Ascending aorta (tissue), 2 donors: ENCODE measurements at regions of chr11 and their contacts with region 1.

Region 1: DNA sequence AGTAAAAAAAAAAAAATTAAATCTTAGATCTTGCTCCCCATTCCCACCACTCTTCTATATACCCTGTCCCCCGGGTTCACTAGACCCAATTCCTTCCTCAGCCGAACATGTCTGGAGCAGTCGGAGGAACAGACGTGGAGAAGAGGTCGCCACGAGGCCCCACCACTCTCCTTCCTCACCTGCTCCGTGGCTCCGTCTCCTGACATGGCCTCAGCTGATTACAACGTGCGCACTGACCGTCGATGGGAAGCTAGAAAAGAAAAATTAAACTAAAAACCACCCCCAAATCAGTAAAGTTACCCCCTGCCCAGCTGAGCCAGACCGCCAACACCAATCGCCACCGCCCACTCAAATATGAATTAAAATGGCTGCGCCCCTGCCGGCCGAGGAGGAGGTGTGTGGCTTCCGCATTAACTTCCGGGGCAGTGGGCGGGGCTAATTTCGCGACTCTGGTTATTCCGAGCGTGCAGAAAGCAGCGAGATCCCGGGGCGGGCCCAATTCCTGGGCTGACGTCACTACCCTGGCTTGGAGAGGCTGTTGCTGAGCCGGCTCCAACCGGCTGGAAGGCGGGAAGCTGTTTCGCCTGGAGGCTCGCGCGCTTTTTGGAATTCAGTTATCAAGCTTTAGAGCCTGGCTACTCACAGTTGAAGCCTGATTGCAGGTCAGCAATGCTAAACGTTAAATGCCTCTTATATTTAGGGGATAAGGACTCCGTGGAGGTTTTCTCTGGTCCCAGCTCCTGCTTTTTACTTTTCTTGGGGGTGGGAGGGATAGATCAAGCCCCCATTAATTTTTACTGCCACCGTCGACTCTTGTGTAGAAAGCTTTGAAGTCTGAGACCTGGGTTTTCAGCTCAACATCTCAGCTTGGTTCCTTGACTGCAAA is at the start of gene CSTF3:
- DNase-seq: peak; percentile 98 to 100
- H3K4me3 ChIP-seq: peak within 1 kb of the TSS; percentile 77 to 88
- H3K27ac ChIP-seq: peak within 1 kb of the TSS; percentile 67 to 82
- H3K4me1 ChIP-seq: peaks cover 8 to 13% of the 10 kb centered on the region in 2 donors
- H3K27me3 ChIP-seq: no peaks in the 10 kb centered on the region
- CTCF ChIP-seq: peak; percentile 16 to 78 (median 54)
- total RNA-seq, gene CSTF3: 3.8 TPM

Region 2: GRCh38 chr11:32583459-32584271 is 577.7 kb before region 1 on chr11 and contains the start of gene EIF3M:
- intact Hi-C with region 1: loop called (anchors 5 kb)
- DNase-seq: peak; percentile 82 to 97
- H3K4me3 ChIP-seq: peak within 1 kb of the TSS; percentile 73 to 94
- H3K27ac ChIP-seq: peak within 1 kb of the TSS; percentile 64 to 86
- H3K4me1 ChIP-seq: peaks cover 7 to 9% of the 10 kb centered on the region in 2 donors
- H3K27me3 ChIP-seq: no peaks in the 10 kb centered on the region
- CTCF ChIP-seq: no peak
- total RNA-seq, gene EIF3M: 149 TPM

Region 3: GRCh38 chr11:33039274-33040032 is 121.9 kb before region 1 on chr11 and contains the start of gene TCP11L1:
- intact Hi-C with region 1: loop called (anchors 2 kb)
- DNase-seq: peak; percentile 62 to 95
- H3K4me3 ChIP-seq: peak within 1 kb of the TSS; percentile 85 to 96
- H3K27ac ChIP-seq: peak within 1 kb of the TSS; percentile 97 to 99
- H3K4me1 ChIP-seq: peaks cover 4 to 7% of the 10 kb centered on the region in 2 donors
- H3K27me3 ChIP-seq: no peaks in the 10 kb centered on the region
- CTCF ChIP-seq: no peak
- total RNA-seq, gene TCP11L1: 33.6 TPM

Region 4: GRCh38 chr11:33329705-33330329 is 168.5 kb after region 1 on chr11:
- intact Hi-C with region 1: loop called (anchors 2 kb)
- DNase-seq: no peak
- H3K4me3 ChIP-seq: no peak overlapping the region
- H3K27ac ChIP-seq: no peak overlapping the region
- H3K4me1 ChIP-seq: peaks cover 0 to 24% of the 10 kb centered on the region in 2 donors
- H3K27me3 ChIP-seq: no peaks in the 10 kb centered on the region
- CTCF ChIP-seq: peak; percentile 15 to 52 (median 46)

Region 5: DNA sequence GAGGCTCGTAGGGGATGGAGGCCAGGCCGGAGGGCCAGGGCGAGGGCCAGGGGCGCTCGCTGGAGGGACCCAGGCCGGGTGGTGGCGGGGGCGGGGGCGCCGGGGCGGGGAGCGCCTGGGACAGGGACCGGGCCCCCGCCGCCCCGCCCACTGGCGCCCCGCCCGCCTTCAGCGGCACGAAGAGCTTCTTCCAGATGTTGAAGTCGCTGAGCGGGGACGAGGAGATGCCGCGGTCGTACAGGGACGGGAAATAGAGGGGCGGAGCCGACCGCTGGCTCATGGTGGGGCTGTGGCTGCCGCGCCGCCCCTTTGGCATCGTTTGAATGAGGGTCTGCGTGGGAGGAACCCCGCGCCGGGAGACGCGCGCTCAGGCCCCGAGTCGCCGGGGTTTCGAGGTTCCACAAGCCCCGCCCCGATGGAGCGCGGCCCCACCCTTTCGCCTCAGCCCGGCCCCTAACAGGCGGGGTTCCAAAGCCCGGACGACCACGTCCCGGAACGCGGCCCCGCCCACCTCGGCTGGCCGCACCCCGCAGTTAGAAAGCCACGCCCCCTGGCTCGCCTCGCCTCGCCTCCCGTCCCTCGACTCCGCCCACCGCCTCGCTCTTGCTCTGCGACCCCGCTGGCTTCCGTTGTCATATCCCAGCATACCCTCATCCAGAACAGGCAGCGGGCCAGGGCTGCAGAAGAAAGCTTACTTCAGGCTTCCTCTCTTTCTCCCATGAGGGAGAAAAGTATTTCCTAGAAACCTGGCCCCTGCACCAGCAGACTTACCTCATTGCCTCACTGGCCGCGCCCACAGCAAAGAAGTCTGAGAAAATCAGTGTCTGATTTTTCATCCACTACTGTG is 539.3 kb after region 1 on chr11 and contains the start of gene C11orf91:
- intact Hi-C with region 1: loop called (anchors 2 kb)
- DNase-seq: peak; percentile 72 to 96
- H3K4me3 ChIP-seq: peak within 1 kb of the TSS; percentile 67 to 72
- H3K27ac ChIP-seq: peak within 1 kb of the TSS; percentile 58 to 67
- H3K4me1 ChIP-seq: peaks cover 0 to 10% of the 10 kb centered on the region in 2 donors
- H3K27me3 ChIP-seq: no peaks in the 10 kb centered on the region
- CTCF ChIP-seq: no peak
- total RNA-seq, gene C11orf91: not detected

Region 6: DNA sequence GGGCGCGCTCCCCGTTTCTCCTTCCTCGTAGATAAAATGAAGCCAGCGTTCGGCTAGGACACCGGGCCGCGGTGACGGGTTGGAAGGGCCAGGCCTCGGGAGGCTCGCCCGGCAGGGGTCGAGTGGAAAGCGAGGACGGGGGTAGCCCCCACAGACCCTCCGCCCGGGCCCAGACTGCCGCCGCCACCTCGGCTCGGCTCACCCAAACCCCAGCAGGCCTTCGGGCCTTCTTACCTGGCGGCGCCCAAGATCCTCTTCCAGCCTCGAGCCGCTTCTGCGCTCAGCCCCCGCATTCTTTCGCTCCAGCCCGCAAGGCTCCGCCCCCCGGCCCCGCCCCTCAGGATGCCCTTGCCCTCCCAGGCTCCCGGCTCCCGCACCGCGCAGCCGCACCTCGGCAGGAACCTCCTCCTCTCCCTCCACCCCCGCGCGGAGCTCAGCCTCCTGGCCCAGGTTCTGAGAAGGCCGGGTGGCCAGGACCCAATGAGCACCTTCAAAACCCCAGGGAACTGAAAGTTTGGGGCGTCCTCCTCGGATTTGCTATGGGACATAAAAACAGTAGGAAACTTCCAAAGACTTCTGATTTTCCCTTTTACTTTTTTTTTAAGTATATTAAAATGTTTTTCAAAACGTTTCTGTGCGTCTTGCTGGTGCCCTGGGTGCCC is 574.9 kb after region 1 on chr11 and contains the start of gene CD59:
- intact Hi-C with region 1: loop called (anchors 5 kb)
- DNase-seq: peak; percentile 84 to 97
- H3K4me3 ChIP-seq: peak within 1 kb of the TSS; percentile 89 to 95
- H3K27ac ChIP-seq: peak within 1 kb of the TSS; percentile 92 to 93
- H3K4me1 ChIP-seq: no peaks in the 10 kb centered on the region
- H3K27me3 ChIP-seq: no peaks in the 10 kb centered on the region
- CTCF ChIP-seq: no peak
- total RNA-seq, gene CD59: 637 TPM

Region 7: GRCh38 chr11:34105079-34105956 is 944.0 kb after region 1 on chr11 and contains the start of gene NAT10:
- intact Hi-C with region 1: loop called (anchors 2 kb)
- DNase-seq: peak; percentile 93 to 99
- H3K4me3 ChIP-seq: peak within 1 kb of the TSS; percentile 82 to 86
- H3K27ac ChIP-seq: peak within 1 kb of the TSS; percentile 93 to 95
- H3K4me1 ChIP-seq: peaks cover 4 to 5% of the 10 kb centered on the region in 2 donors
- H3K27me3 ChIP-seq: no peaks in the 10 kb centered on the region
- CTCF ChIP-seq: no peak
- total RNA-seq, gene NAT10: 11.3 TPM